Activated CD8-positive, alpha-beta T cell treated with anti-CD3 and anti-CD28 coated beads for 36 hours (primary cell): ENCODE measurements at regions of chr17 and their contacts with region 1.

Region 1: GRCh38 chr17:64306850-64307463 is 43.9 kb upstream of the TEX2 start:
- DNase-seq: peak; percentile 85
- ATAC-seq: peak; percentile 69
- H3K4me3 Mint-ChIP-seq: no peak overlapping the region
- H3K27ac Mint-ChIP-seq: no peak overlapping the region
- H3K4me1 Mint-ChIP-seq: peaks cover 4% of the 10 kb centered on the region
- H3K27me3 Mint-ChIP-seq: no peaks in the 10 kb centered on the region
- CTCF ChIP-seq: peak; percentile 94

Region 2: DNA sequence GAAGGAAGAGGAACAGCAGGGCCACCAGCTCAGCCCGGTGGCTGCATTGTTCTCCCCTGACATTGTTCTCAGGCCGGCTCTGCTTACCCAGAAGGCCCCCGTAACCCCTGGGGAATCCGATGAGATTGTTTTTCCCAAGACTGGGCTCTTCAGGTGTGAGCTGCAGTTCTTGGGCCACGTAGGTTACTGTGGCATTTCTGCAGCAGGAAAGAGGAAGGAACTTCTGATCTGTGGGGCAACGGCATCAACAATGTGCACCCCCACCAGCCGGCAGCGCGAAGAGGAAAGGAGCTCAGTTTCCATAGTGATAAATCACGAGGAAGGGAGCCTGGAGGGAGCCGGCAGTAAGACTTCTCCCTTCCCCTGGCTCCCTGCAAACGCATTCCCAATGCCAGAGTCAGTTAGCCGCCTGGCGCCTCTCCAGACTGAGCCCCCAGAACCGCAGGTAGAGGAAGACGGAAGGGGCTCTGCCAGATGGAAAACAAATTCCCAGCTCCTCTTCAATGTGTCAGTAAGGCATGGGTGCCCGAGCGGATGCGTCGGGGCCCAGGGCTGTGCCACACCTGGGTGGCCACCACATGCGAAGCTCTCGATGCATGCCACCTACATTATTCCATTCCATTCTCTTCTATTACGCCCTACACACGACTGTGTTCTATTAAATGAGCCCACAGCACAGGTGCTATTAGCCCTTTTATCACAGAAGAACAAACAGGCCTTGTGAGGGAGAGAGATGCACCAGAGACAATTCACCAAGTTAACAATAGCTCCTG is 105.2 kb after region 1 on chr17:
- CTCF ChIA-PET with region 1: interaction called, 251 read pairs
- POLR2A ChIA-PET with region 1: no interaction called
- intact Hi-C with region 1: no loop called
- DNase-seq: no peak
- ATAC-seq: peak; percentile 13
- H3K4me3 Mint-ChIP-seq: peak overlapping the region; percentile 39
- H3K27ac Mint-ChIP-seq: no peak overlapping the region
- H3K4me1 Mint-ChIP-seq: peaks cover 13% of the 10 kb centered on the region
- H3K27me3 Mint-ChIP-seq: no peaks in the 10 kb centered on the region
- CTCF ChIP-seq: no peak